Mammary epithelial cell (primary cell): ENCODE measurements at regions of chr20 and their contacts with region 1.

Region 1: DNA sequence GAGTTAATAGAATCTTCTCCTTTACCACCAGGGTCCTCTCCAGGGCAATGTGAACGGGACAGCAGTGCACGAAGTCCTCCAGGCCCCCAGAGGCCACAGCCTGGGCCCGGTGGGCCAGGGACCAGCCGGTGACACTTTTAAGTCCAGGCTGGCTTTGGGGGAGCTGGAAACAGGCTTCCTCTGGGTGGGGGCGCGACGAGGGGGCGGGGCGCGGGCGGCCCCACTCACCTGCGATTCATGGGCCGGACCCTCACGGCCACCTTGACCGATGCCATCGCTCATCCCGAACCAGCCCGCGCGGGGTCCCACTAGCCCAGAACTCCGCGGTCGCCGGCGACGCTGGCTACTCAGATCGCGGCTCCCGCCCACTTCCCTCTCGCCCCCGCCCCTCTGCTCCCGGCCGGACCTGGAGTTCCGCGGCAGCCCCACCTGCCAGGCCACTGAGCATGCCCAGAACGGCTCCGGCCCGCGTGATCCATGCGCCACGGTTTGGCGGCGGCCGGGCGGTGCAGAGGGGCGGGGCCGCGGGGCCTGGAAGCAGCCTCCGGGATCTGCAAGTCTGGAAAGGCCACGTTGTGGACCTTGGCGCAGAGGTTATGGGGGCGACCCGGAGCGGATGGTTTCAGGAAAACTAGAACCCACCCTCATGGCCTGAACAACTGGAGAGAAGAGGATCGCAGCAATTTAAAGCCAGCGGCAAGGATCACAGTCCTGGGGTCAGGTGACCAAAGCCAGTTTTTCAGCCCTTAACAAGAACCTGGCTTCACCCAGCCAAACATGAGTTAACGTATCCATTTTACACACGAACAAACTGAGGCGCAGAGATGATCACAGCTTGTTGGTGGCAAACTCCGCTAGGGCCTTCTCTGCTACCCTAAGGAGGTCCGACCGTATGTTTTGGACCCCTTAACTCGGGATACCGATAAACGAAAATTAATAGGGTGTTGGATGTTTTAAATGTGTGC is at the start of gene KIF16B:
- DNase-seq: peak; percentile 91
- H3K4me3 ChIP-seq: peak within 1 kb of the TSS; percentile 84 to 85 (median 85)
- H3K27ac ChIP-seq: peak within 1 kb of the TSS; percentile 42
- H3K4me1 ChIP-seq: peaks cover 19% of the 10 kb centered on the region
- H3K27me3 ChIP-seq: no peaks in the 10 kb centered on the region
- CTCF ChIP-seq: no peak
- total RNA-seq, gene KIF16B: 12.2 to 15.0 TPM

Region 2: DNA sequence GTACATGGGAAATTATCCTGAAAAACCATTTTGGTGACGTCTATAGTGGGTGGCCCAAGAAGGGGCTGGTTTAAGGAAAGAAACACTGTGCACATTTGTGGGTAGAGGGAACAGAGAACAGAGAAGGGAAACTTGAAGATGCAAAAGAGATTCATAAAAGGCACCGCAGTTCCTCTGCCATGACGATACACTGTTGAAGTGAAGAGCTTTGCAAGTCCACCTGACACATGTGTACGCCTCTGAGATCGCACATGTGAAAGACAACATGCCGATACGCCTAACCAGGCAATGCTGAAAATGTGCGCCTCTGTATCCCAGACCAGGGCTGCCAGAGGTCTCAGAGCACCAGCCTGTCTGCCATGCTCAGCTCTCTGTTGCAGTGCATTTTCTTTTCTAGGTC is 180.9 kb before region 1 on chr20:
- CTCF ChIA-PET with region 1: no interaction called
- dilution Hi-C with region 1: no loop called
- in situ Hi-C with region 1: no loop called
- intact Hi-C with region 1: no loop called
- DNase-seq: no peak
- H3K4me3 ChIP-seq: no peak overlapping the region
- H3K27ac ChIP-seq: no peak overlapping the region
- H3K4me1 ChIP-seq: no peaks in the 10 kb centered on the region
- H3K27me3 ChIP-seq: no peaks in the 10 kb centered on the region
- CTCF ChIP-seq: no peak

Region 3: GRCh38 chr20:16517946-16518783 is 55.1 kb before region 1 on chr20:
- CTCF ChIA-PET with region 1: no interaction called
- dilution Hi-C with region 1: no loop called
- in situ Hi-C with region 1: no loop called
- intact Hi-C with region 1: loop called (anchors 1 kb)
- DNase-seq: peak; percentile 47
- H3K4me3 ChIP-seq: no peak overlapping the region
- H3K27ac ChIP-seq: no peak overlapping the region
- H3K4me1 ChIP-seq: no peaks in the 10 kb centered on the region
- H3K27me3 ChIP-seq: no peaks in the 10 kb centered on the region
- CTCF ChIP-seq: peak; percentile 51 to 70

Region 4: GRCh38 chr20:16528078-16528477 is 45.2 kb before region 1 on chr20:
- CTCF ChIA-PET with region 1: no interaction called
- dilution Hi-C with region 1: no loop called
- in situ Hi-C with region 1: no loop called
- intact Hi-C with region 1: loop called (anchors 2 kb)
- DNase-seq: peak; percentile 92
- H3K4me3 ChIP-seq: peak overlapping the region in 1 of 3 experiments; percentile 22
- H3K27ac ChIP-seq: peak overlapping the region; percentile 92
- H3K4me1 ChIP-seq: peaks cover 14% of the 10 kb centered on the region
- H3K27me3 ChIP-seq: no peaks in the 10 kb centered on the region
- CTCF ChIP-seq: no peak

Region 5: GRCh38 chr20:16639027-16639941 is 66.0 kb after region 1 on chr20:
- CTCF ChIA-PET with region 1: no interaction called
- dilution Hi-C with region 1: no loop called
- in situ Hi-C with region 1: no loop called
- intact Hi-C with region 1: no loop called
- DNase-seq: no peak
- H3K4me3 ChIP-seq: no peak overlapping the region
- H3K27ac ChIP-seq: no peak overlapping the region
- H3K4me1 ChIP-seq: no peaks in the 10 kb centered on the region
- H3K27me3 ChIP-seq: no peaks in the 10 kb centered on the region
- CTCF ChIP-seq: no peak

Region 6: GRCh38 chr20:16729565-16730456 is 156.5 kb after region 1 on chr20 and contains the start of gene SNRPB2:
- CTCF ChIA-PET with region 1: no interaction called
- dilution Hi-C with region 1: no loop called
- in situ Hi-C with region 1: no loop called
- intact Hi-C with region 1: loop called (anchors 10 kb)
- DNase-seq: peak; percentile 89
- H3K4me3 ChIP-seq: peak within 1 kb of the TSS; percentile 77 to 96 (median 96)
- H3K27ac ChIP-seq: peak within 1 kb of the TSS; percentile 82
- H3K4me1 ChIP-seq: peaks cover 8% of the 10 kb centered on the region
- H3K27me3 ChIP-seq: no peaks in the 10 kb centered on the region
- CTCF ChIP-seq: peak in 1 of 2 donors; percentile 14
- total RNA-seq, gene SNRPB2: 24.8 to 51.2 TPM